GM10248 (cell line): ENCODE measurements at regions of chr10 and their contacts with region 1.

Region 1: DNA sequence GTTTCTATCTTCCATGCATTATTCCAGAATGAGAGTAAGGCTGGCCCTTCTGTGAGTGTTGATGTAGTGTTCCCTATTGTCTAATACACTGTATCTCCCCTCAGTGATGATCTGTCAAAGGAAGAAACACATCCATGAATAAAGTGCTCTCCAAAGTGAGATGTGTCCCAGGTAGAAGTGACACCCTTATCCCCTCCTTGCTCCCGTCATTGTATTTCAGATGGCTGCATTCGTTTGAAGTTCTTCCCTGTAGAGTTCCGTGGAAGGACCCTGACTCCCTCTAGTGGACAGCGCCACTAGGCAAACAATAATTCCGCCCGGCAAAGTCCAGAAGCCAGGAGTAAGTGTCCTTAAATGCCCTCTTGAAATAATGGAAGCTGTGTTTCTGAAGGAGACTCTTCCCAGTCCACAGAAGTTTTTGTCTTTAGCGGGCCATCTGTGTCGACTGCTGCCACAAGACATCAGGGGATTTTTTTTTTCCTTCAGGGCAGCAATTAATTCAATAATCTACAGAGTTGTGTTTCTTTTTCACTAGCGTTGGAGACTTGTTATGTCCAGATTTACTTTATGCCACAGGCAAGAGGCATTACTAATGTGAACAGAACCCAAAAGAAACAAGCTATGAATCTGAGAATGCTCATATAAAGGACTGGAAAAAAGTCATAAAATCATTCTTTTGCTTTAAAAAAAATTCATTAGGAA is 64.6 kb downstream of the THNSL1 start:
- DNase-seq: peak; percentile 50
- CTCF ChIP-seq: peak; percentile 79

Region 2: DNA sequence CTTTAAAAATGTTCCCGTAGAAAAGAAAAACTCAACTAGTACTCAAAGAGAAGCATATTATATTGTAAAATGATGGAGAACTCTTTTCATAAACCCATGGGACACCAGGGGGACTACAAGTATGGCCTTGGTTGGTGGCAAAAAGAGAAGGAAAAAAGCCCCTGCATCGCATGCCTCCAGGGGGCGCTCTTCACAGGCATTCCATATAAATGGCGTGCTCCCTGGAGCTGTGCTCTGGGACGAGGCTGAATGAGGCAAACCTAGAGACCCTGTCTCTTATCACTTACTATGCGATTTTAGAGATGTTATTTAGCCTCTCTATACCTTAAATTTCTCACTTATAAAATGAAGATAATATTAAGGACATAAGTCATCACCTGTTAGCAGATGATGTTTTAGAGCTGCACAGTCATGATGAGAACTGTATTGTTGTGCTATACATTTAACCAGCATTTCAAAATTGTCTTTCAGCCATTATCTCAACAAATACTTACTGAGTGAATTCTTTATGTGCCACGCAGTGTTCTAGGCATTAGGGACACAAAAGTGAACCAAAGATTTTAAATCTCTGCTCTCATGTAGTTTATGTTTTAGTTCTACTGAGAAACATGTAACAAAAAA is 463.1 kb before region 1 on chr10:
- CTCF ChIA-PET with region 1: interaction called, 95 read pairs
- POLR2A ChIA-PET with region 1: no interaction called
- DNase-seq: peak; percentile 36
- CTCF ChIP-seq: peak; percentile 74

Region 3: GRCh38 chr10:25024528-25024927 is 56.5 kb before region 1 on chr10:
- CTCF ChIA-PET with region 1: interaction called, 11 read pairs
- POLR2A ChIA-PET with region 1: no interaction called
- DNase-seq: no peak
- CTCF ChIP-seq: no peak

Region 4: DNA sequence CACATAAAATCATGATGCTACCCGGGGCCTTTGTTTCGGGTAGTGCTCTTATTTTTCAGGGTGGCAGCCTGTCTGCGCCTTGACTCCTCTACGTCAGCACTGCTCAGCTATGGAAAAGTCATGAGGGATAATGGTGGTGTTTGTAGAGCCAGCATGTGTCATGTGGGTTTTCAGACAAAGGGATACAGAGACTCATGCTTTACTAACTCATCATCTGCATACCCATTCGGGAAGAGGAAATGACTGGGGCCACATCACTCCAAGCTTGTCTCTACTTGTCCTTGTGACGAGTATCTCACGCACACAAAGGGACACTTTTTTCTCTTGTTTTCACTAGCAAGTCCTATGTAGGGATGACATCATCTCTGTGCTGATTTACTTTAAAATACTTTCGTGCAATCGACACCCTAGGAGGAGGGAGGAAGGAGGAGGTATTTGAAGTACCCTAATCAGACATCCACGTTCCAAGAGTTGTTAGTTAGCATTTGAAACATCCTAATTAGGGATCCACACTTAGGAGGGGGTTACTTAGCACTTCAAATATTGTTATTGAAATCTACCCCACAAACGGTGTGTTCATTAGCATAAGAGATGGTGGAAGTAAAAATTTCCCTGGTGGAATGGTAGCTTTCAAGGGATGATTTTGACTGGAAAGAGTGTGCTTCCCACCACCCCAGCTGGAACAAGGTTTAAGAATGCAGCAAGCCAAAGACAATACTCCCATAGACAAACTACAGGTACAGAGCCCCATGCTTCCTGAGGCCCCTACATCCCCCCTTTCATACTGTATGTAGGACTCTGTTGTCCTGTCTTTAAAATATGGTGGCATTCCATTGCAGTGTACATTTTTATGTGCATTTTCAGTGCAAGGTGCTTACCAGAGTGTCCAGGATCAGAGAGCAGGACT is 12.6 kb before region 1 on chr10:
- CTCF ChIA-PET with region 1: interaction called, 38 read pairs
- POLR2A ChIA-PET with region 1: no interaction called
- DNase-seq: no peak
- CTCF ChIP-seq: no peak

Region 5: GRCh38 chr10:25113191-25114035 is 32.4 kb after region 1 on chr10:
- CTCF ChIA-PET with region 1: interaction called, 14 read pairs
- POLR2A ChIA-PET with region 1: no interaction called
- DNase-seq: peak; percentile 61
- CTCF ChIP-seq: peak; percentile 80

Region 6: DNA sequence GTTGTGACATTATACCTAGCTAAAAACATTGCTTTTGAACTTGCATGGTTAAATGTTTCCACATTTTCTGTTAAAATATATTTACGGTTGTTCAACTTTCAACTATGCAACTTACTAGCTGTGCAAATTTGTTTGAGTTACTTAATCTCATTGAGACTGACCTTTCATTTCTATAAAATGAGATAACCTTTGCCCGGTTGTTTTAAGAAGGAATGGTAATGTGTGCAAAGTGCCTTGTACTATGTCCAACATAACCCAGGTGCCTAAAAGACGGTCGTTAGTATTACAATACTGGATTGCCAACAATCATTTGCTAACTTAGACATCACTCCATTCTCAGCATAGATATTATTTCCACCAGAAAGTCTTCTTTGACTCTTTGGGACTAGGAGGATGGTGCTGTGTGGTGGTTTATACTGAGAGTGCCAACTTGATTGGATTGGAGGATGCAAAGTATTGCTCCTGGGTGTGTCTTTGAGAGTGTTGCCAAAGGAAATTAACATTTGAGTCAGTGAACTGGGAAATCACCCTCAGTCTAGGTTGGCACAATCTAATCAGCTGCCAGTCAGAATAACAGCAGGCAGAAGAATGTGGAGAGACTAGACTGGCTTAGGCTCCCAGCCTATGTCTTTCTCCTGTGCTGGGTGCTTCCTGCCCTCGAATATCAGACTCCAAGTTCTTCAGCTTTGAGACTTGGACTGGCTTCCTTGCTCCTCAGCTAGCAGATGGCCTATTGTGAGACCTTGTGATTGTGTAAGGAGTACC is 1531.3 kb after region 1 on chr10:
- CTCF ChIA-PET with region 1: no interaction called
- POLR2A ChIA-PET with region 1: no interaction called
- DNase-seq: no peak
- CTCF ChIP-seq: no peak